ENCODE measurements at regions of chr1 and their contacts with region 1.

Region 1: DNA sequence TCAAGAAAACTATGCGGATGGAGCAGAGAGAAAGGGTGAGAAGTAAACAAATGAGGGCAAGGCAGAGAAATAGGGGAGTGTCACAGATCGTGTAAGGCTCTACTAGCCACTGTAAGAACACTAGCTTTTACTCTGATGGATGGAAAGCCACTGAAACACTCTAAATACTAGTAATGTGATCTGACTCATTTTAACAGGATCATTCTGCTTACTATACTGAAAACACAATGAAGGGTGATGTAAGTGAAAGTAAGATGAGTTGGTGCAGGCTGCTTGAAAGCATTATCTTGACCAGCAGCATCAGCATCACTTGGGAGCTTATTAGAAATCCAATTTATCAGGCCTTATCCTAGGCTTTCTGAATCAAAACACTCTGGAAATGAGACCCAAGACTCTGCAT is 32.7 kb downstream of the TUT4 start:
- DNase-seq: no peak
- ATAC-seq: no peak
- H3K4me3 ChIP-seq: no peak overlapping the region
- H3K4me3 Mint-ChIP-seq: no peak overlapping the region
- H3K27ac ChIP-seq: no peak overlapping the region
- H3K27ac Mint-ChIP-seq: no peak overlapping the region
- H3K4me1 ChIP-seq: peaks cover 6 to 7% of the 10 kb centered on the region in 2 experiments
- H3K4me1 Mint-ChIP-seq: peaks cover 38 to 44% (median 43%) of the 10 kb centered on the region in 3 donors
- H3K27me3 ChIP-seq: no peaks in the 10 kb centered on the region
- H3K27me3 Mint-ChIP-seq: no peaks in the 10 kb centered on the region

Region 2: GRCh38 chr1:52544665-52545525 is 24.7 kb after region 1 on chr1:
- CTCF ChIA-PET with region 1: no interaction called
- POLR2A ChIA-PET with region 1: interaction called in 1 of 2 experiments, 11 read pairs
- DNase-seq: no peak
- ATAC-seq: no peak
- H3K4me3 ChIP-seq: no peak overlapping the region
- H3K4me3 Mint-ChIP-seq: no peak overlapping the region
- H3K27ac ChIP-seq: no peak overlapping the region
- H3K27ac Mint-ChIP-seq: no peak overlapping the region
- H3K4me1 ChIP-seq: peaks cover 3 to 14% of the 10 kb centered on the region in 2 experiments
- H3K4me1 Mint-ChIP-seq: peaks cover 37 to 46% (median 41%) of the 10 kb centered on the region in 3 donors
- H3K27me3 ChIP-seq: no peaks in the 10 kb centered on the region
- H3K27me3 Mint-ChIP-seq: no peaks in the 10 kb centered on the region

Region 3: GRCh38 chr1:52574594-52574993 is 54.4 kb after region 1 on chr1:
- CTCF ChIA-PET with region 1: no interaction called
- POLR2A ChIA-PET with region 1: no interaction called
- DNase-seq: no peak
- ATAC-seq: no peak
- H3K4me3 ChIP-seq: no peak overlapping the region
- H3K4me3 Mint-ChIP-seq: no peak overlapping the region
- H3K27ac ChIP-seq: no peak overlapping the region
- H3K27ac Mint-ChIP-seq: no peak overlapping the region
- H3K4me1 ChIP-seq: peaks cover 3 to 6% of the 10 kb centered on the region in 2 experiments
- H3K4me1 Mint-ChIP-seq: peaks cover 8 to 24% (median 18%) of the 10 kb centered on the region in 3 donors
- H3K27me3 ChIP-seq: no peaks in the 10 kb centered on the region
- H3K27me3 Mint-ChIP-seq: no peaks in the 10 kb centered on the region

Region 4: GRCh38 chr1:53294567-53294966 is 774.4 kb after region 1 on chr1:
- CTCF ChIA-PET with region 1: no interaction called
- POLR2A ChIA-PET with region 1: no interaction called
- DNase-seq: peak in 10 of 35 experiments; percentile 2 to 41 (median 12)
- ATAC-seq: peak; percentile 69 to 81 (median 74)
- H3K4me3 ChIP-seq: no peak overlapping the region
- H3K4me3 Mint-ChIP-seq: no peak overlapping the region
- H3K27ac ChIP-seq: peak overlapping the region; percentile 10
- H3K27ac Mint-ChIP-seq: peak overlapping the region; percentile 10 to 77
- H3K4me1 ChIP-seq: peaks cover 0 to 49% of the 10 kb centered on the region in 2 experiments
- H3K4me1 Mint-ChIP-seq: peaks cover 27 to 36% (median 31%) of the 10 kb centered on the region in 3 donors
- H3K27me3 ChIP-seq: no peaks in the 10 kb centered on the region
- H3K27me3 Mint-ChIP-seq: no peaks in the 10 kb centered on the region

Measured in T-cell (primary cell).